ENCODE measurements at regions of chr3 and their contacts with region 1.

Region 1: GRCh38 chr3:172580680-172581401 is 57.6 kb upstream of the TNFSF10 start:
- DNase-seq: no peak
- H3K4me3 Mint-ChIP-seq: peak overlapping the region; percentile 79
- H3K27ac Mint-ChIP-seq: peak overlapping the region; percentile 88
- H3K4me1 Mint-ChIP-seq: peaks cover 97% of the 10 kb centered on the region
- H3K27me3 Mint-ChIP-seq: no peaks in the 10 kb centered on the region

Region 2: DNA sequence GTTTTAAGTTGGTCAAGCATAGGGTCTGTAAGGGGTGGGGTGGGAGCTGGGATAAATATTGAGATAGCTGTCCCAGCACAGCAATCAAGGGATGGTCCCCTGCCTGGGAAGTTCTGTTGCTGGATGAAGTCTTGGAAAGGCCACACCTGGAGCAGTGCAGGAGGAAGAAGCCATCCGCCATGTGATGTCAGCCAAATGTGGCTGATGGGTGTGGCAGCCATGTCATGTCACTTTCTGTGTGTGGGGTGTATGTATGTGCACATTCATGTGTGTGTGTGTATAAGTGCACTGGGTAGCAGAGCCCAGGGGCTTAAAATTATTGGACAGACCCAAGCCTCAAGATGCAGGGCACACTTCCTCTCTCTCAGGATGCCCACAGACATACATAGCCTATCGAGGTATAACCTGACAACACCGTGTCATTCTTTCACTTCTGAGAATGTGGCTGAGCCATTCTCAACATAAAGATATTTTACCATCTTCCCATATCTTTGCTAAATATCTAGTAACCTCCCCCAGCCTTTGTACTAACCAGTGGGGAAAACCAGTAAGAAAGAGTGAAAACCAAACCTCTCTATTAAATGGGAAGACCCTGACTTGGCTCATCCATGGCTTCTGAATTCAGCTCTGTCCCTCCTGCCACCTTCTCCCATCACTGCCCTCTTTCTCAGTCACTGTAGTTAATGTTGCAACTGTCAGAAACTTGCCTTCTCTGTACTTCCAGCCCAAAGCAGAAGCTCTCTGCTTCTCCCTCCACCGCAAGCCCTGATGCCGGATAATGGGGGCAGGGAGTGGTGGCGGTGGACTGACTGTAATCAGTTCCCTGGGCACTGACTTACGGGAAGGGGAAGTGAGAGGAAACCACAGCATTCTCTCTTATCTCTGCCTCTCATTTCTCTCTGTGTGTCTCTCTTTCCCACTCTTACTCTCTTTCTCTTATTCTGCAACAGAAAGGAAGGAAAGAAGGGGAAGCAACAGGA is 68.8 kb before region 1 on chr3:
- intact Hi-C with region 1: loop called (anchors 1 kb)
- DNase-seq: peak; percentile 69
- H3K4me3 Mint-ChIP-seq: peak overlapping the region; percentile 43
- H3K27ac Mint-ChIP-seq: peak overlapping the region; percentile 88
- H3K4me1 Mint-ChIP-seq: peaks cover 98% of the 10 kb centered on the region
- H3K27me3 Mint-ChIP-seq: no peaks in the 10 kb centered on the region

Measured in activated T-helper 1 cell treated with anti-CD3 and anti-CD28 coated beads, Interleukin-12 subunit alpha, Interleukin-12 subunit beta, Interleukin-2, Interleukin-4 antibody, amounts not matched to agents 30 ng/mL and 10 ng/mL and 1 ng/mL, durations not matched to agents 14 hours and 24 hours and 36 hours (primary cell).